ENCODE measurements at regions of chr9 and their contacts with region 1.

Region 1: DNA sequence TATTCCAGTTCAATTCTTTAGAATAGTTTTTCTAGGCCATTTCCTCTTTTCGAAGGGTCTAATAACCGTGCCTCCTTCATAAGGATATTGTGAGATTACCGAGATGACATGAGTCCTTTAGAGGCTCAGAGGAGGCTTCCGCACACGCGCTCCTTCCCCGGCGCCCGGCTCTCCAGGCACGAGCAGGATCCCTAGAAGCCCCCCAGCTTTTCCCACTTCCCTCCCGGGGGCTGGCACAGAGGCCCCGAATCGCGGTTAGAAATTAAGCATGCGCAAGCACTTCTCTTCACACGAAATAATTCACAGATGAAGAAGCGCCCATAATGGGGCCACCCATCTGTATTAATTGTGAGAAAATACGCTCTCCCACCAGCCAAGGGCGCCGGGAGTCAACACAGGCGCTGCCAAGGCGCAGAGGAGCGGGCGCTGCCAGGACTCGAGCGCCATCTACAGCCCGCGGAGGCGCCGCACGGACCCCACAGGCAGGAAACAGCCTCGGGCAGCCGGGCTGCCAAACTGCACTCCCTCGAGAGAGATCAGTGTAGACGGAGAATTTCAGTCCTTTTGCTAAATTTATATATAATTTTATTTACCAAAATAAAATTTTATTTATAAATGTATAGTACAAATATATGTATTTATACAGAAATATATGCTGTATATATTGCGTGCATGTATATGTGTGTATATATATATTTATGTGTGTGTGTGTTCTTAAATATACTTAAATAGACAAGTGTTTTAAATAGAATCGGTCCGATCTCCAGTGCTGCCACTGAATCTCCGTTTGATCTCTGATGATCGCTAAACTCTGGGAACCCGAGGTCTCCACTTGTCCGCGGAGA is 258.1 kb upstream of the NFIL3 start:
- DNase-seq: peak; percentile 82
- H3K4me3 Mint-ChIP-seq: no peak overlapping the region
- H3K27ac Mint-ChIP-seq: no peak overlapping the region
- H3K4me1 Mint-ChIP-seq: peaks cover 5% of the 10 kb centered on the region
- H3K27me3 Mint-ChIP-seq: peaks cover 30% of the 10 kb centered on the region

Region 2: GRCh38 chr9:91433180-91433579 is 248.5 kb before region 1 on chr9:
- CTCF ChIA-PET with region 1: no interaction called
- POLR2A ChIA-PET with region 1: no interaction called
- intact Hi-C with region 1: loop called (anchors 10 kb)
- DNase-seq: no peak
- H3K4me3 Mint-ChIP-seq: no peak overlapping the region
- H3K27ac Mint-ChIP-seq: no peak overlapping the region
- H3K4me1 Mint-ChIP-seq: peaks cover 15% of the 10 kb centered on the region
- H3K27me3 Mint-ChIP-seq: peaks cover 14% of the 10 kb centered on the region

Region 3: DNA sequence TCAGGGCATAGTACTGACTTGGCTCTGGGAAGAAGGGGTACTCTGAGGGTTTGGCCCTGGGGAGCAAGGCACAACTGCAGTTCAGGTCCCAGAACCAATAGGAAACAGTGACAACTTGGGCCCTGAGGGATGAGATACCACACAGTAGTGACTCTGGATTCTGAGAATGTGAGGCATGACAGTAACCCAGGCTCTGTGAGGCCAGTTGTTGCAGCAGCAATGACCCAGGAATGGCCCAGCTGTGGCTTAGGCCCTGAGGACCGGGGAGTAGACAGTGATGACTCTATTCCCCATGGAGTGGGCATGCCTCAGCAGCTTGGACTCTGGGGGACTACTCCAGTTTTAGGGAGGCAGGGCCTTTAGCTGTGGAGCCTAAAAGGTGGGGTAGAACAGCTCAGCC is 236.5 kb before region 1 on chr9:
- CTCF ChIA-PET with region 1: no interaction called
- POLR2A ChIA-PET with region 1: no interaction called
- intact Hi-C with region 1: no loop called
- DNase-seq: no peak
- H3K4me3 Mint-ChIP-seq: no peak overlapping the region
- H3K27ac Mint-ChIP-seq: no peak overlapping the region
- H3K4me1 Mint-ChIP-seq: no peaks in the 10 kb centered on the region
- H3K27me3 Mint-ChIP-seq: peaks cover 18% of the 10 kb centered on the region

Measured in activated CD4-positive, alpha-beta memory T cell treated with anti-CD3 and anti-CD28 coated beads for 36 hours (primary cell).